ENCODE measurements at regions of chr10 and their contacts with region 1.

Region 1: DNA sequence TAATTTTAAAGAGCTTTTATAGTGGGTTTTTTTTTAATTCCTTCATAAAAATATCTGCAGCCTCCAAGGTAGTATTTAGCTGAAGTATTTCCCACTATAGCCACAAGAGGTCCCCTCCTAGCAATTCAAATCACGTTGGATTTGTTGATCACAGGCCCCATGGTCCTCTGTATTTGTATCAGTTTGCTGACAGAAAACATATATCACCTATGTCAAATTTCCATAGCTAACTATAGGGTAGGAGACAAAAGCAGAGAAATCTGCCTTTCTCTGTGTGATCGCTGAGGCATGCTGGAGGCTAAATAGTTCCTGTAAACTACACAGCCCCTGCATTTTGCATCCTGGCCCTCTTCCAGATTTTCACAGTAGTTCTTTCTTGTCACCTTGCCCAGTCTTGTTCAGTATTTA is 1.7 kb upstream of the CTNNA3 start:
- DNase-seq: peak in 5 of 9 experiments; percentile 11 to 71 (median 21)
- ATAC-seq: peak; percentile 87
- H3K4me3 ChIP-seq: no peak overlapping the region
- H3K4me3 Mint-ChIP-seq: no peak overlapping the region
- H3K27ac ChIP-seq: no peak overlapping the region
- H3K27ac Mint-ChIP-seq: no peak overlapping the region
- H3K4me1 ChIP-seq: no peaks in the 10 kb centered on the region
- H3K4me1 Mint-ChIP-seq: peaks cover 4% of the 10 kb centered on the region
- H3K27me3 ChIP-seq: no peaks in the 10 kb centered on the region
- H3K27me3 Mint-ChIP-seq: peaks cover 33% of the 10 kb centered on the region
- CTCF ChIP-seq: peak; percentile 72

Region 2: DNA sequence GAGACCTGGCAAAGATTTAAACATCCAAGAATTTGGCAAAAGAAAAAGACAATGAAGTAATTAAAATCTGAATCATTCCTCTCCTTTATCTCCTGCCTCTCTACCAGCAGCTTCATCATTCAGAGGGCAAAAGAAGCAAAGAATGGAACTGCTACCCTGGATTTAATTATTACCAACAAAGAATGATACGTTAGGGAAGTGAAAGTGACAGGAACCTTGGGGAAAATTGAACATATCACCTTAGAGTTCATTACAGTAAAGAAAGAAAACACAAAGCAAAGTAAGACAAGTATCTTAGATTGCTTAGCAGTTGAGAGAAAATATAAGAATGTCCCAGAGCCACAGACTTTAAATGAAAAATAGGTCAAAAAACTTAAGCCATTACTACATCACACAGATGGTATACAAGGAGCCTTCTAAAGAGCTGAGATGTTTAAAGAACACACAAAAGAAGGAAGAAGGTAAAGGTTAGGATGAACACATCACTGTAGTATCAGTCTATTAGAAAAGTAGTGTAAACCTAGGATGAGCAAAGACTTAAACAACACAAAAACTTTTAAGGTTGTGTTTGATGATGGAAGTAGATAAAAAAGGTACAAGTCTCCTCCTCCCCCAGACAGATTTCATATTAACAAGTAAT is 19.3 kb before region 1 on chr10:
- CTCF ChIA-PET with region 1: interaction called, 11 read pairs
- POLR2A ChIA-PET with region 1: no interaction called
- intact Hi-C with region 1: no loop called
- DNase-seq: no peak
- ATAC-seq: no peak
- H3K4me3 ChIP-seq: no peak overlapping the region
- H3K4me3 Mint-ChIP-seq: no peak overlapping the region
- H3K27ac ChIP-seq: no peak overlapping the region
- H3K27ac Mint-ChIP-seq: no peak overlapping the region
- H3K4me1 ChIP-seq: no peaks in the 10 kb centered on the region
- H3K4me1 Mint-ChIP-seq: no peaks in the 10 kb centered on the region
- H3K27me3 ChIP-seq: peaks cover 0 to 5% of the 10 kb centered on the region in 2 experiments
- H3K27me3 Mint-ChIP-seq: peaks cover 27% of the 10 kb centered on the region
- CTCF ChIP-seq: no peak

Region 3: DNA sequence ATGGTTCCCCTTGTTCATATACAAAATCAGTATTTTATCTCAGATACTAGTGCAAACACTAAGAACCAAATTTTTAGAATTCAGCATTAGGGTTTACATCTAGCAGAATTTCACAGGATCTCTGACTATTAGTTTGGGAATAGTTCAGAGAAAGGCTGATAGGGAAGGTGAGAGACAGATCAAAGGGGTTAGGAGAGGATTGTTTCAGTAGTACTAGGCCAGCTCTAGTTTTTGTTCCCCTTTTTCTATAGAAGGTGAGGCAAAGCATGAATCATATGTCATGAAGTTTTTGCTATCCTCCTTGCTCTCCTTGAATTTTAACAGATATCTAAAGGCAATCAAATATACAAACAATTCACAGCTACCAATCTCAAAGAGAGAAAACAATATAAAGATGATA is 24.4 kb after region 1 on chr10:
- CTCF ChIA-PET with region 1: interaction called, 15 read pairs
- POLR2A ChIA-PET with region 1: interaction called, 3 read pairs
- intact Hi-C with region 1: no loop called
- DNase-seq: no peak
- ATAC-seq: no peak
- H3K4me3 ChIP-seq: no peak overlapping the region
- H3K4me3 Mint-ChIP-seq: no peak overlapping the region
- H3K27ac ChIP-seq: no peak overlapping the region
- H3K27ac Mint-ChIP-seq: no peak overlapping the region
- H3K4me1 ChIP-seq: no peaks in the 10 kb centered on the region
- H3K4me1 Mint-ChIP-seq: no peaks in the 10 kb centered on the region
- H3K27me3 ChIP-seq: no peaks in the 10 kb centered on the region
- H3K27me3 Mint-ChIP-seq: peaks cover 3% of the 10 kb centered on the region
- CTCF ChIP-seq: no peak

Region 4: GRCh38 chr10:67772894-67773511 is 75.3 kb after region 1 on chr10:
- CTCF ChIA-PET with region 1: interaction called, 300 read pairs
- POLR2A ChIA-PET with region 1: no interaction called
- intact Hi-C with region 1: no loop called
- DNase-seq: no peak
- ATAC-seq: no peak
- H3K4me3 ChIP-seq: no peak overlapping the region
- H3K4me3 Mint-ChIP-seq: no peak overlapping the region
- H3K27ac ChIP-seq: no peak overlapping the region
- H3K27ac Mint-ChIP-seq: no peak overlapping the region
- H3K4me1 ChIP-seq: no peaks in the 10 kb centered on the region
- H3K4me1 Mint-ChIP-seq: peaks cover 2% of the 10 kb centered on the region
- H3K27me3 ChIP-seq: no peaks in the 10 kb centered on the region
- H3K27me3 Mint-ChIP-seq: no peaks in the 10 kb centered on the region
- CTCF ChIP-seq: no peak